H1 (cell line): ENCODE measurements at regions of chr12 and their contacts with region 1.

Region 1: DNA sequence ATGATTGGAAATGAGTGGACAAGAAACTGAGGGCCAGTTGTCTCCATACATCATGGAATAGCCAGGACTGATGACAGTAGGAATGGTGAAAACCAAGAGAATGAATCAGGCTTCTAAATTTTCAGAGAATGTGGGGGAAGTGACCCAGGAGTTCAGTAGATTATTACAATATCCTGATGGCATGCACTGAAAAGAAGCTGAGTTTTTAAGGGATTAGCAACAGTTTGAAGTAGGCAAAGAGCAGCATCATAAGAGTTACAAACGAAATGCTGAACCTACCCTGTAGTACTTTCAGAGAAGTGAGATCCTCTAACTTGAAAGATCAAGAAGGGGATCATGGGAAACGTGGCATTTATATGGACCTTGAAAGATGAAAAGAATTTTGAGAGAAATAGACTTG is 13.2 kb downstream of the SLC2A14 start:
- DNase-seq: no peak
- H3K4me3 ChIP-seq: no peak overlapping the region
- H3K27ac ChIP-seq: no peak overlapping the region
- H3K4me1 ChIP-seq: peaks cover 0 to 11% (median 3%) of the 10 kb centered on the region in 4 experiments; a peak in 3 of 7 replicates
- H3K27me3 ChIP-seq: no peaks in the 10 kb centered on the region
- CTCF ChIP-seq: no peak
- EP300 ChIP-seq: no peak
- POLR2A ChIP-seq: no peak
- RAD21 ChIP-seq: no peak

Region 2: DNA sequence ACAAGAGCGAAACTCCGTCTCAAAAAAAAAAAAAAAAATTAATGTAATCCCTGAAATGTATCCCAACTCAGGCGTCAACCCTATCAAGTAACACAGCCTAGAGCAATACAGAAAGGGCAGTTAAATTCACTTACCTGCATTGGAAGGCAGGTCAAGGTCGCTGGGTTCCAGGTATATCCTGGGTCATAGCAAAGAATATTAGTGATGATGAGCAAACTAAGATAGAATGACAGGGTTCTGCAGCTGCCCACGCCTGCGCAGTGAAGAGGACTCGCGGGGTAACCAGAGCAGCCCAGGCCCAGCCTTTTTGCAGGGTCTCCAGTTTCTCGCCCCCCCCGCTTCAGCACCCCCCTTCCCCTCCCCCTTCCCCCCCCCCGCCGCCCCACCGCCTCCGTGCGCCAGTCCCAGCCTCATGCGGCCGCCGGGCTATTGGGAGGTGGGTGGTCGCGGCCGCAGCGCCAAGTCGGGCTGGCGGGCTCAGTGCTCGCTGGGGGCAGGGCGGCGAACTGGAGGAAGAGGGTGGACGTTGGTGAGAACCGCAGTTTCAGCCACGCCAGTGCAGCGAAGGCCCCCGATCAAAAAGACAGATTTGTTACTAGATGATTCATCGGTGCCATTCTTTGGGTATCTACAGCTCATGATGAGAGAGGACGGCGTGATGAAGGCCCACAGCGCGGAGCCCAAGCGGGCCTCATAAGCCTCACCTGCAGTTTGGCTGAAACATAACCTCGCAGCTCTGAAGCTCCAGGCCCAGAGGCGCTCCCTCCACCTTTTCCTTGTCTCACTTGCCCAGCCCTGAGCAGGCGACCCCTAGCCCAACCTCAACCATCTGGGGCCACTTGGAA is 56.2 kb after region 1 on chr12:
- CTCF ChIA-PET with region 1: interaction called, 16 read pairs
- POLR2A ChIA-PET with region 1: interaction called, 10 read pairs
- DNase-seq: peak in 1 of 2 experiments; percentile 55
- H3K4me3 ChIP-seq: no peak overlapping the region
- H3K27ac ChIP-seq: no peak overlapping the region
- H3K4me1 ChIP-seq: peaks cover 0 to 12% (median 3%) of the 10 kb centered on the region in 4 experiments; a peak in 5 of 7 replicates
- H3K27me3 ChIP-seq: no peaks in the 10 kb centered on the region
- CTCF ChIP-seq: no peak
- EP300 ChIP-seq: no peak
- POLR2A ChIP-seq: no peak
- RAD21 ChIP-seq: no peak

Region 3: GRCh38 chr12:7923241-7924236 is 64.0 kb after region 1 on chr12:
- CTCF ChIA-PET with region 1: interaction called, 16 read pairs
- POLR2A ChIA-PET with region 1: interaction called, 22 read pairs
- DNase-seq: no peak
- H3K4me3 ChIP-seq: no peak overlapping the region
- H3K27ac ChIP-seq: no peak overlapping the region
- H3K4me1 ChIP-seq: no peaks in the 10 kb centered on the region
- H3K27me3 ChIP-seq: no peaks in the 10 kb centered on the region
- CTCF ChIP-seq: no peak
- EP300 ChIP-seq: no peak
- POLR2A ChIP-seq: peak in 1 of 2 experiments; percentile 43; a peak in 1 of 3 replicates
- RAD21 ChIP-seq: no peak